ENCODE measurements at regions of chr1 and their contacts with region 1.

Region 1: GRCh38 chr1:239951511-239952140 is 140.1 kb upstream of the FMN2 start:
- DNase-seq: peak; percentile 83
- H3K4me3 Mint-ChIP-seq: no peak overlapping the region
- H3K27ac Mint-ChIP-seq: no peak overlapping the region
- H3K4me1 Mint-ChIP-seq: no peaks in the 10 kb centered on the region
- H3K27me3 Mint-ChIP-seq: no peaks in the 10 kb centered on the region

Region 2: DNA sequence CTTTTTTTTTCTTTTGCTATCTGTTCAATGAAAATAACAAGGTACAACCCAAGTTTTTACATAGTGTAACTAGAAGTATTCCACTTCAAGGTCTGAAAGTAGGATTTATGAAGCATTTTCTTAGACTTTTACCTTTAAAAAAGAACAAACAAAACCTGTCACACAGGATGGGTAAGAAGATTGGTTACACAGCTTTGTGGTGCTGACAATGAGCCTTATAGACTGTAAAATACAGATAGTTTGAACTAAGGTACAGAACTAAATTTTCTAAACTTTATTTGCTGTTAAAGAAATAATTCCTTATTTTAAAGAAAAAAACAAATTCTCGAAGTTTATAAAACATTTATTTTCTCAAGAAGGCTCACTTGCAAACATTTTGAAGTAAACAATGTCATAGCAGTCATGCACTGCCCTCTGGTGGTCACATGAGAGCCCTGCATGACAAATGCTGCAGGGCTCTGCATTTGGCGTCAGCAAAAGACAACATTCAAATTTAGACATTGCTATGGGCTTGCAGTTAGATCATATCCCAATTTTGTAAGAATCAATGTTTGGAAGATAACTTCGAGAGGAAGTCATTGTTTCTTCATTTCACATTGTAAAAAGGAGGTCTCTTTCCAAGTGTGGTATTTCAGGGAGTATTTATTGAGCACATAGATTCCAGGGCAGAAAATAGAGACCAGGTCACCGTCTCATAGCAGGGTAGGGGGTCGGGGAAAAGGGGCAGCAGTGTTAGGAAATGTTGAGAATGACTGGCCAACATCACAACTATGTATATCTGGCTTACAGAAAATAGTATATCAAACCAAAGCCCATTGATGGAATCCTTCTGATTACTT is 24.7 kb after region 1 on chr1:
- intact Hi-C with region 1: loop called (anchors 2 kb)
- DNase-seq: peak; percentile 82
- H3K4me3 Mint-ChIP-seq: no peak overlapping the region
- H3K27ac Mint-ChIP-seq: no peak overlapping the region
- H3K4me1 Mint-ChIP-seq: no peaks in the 10 kb centered on the region
- H3K27me3 Mint-ChIP-seq: no peaks in the 10 kb centered on the region

Region 3: GRCh38 chr1:239987103-239987745 is 35.6 kb after region 1 on chr1:
- intact Hi-C with region 1: no loop called
- DNase-seq: peak; percentile 59
- H3K4me3 Mint-ChIP-seq: no peak overlapping the region
- H3K27ac Mint-ChIP-seq: no peak overlapping the region
- H3K4me1 Mint-ChIP-seq: no peaks in the 10 kb centered on the region
- H3K27me3 Mint-ChIP-seq: no peaks in the 10 kb centered on the region

Measured in activated CD4-positive, alpha-beta T cell treated with anti-CD3 and anti-CD28 coated beads, Interleukin-2, amount 10 ng/mL, durations not matched to agents 24 days and 14 days (primary cell).